ENCODE measurements at regions of chr20 and their contacts with region 1.

Region 1: DNA sequence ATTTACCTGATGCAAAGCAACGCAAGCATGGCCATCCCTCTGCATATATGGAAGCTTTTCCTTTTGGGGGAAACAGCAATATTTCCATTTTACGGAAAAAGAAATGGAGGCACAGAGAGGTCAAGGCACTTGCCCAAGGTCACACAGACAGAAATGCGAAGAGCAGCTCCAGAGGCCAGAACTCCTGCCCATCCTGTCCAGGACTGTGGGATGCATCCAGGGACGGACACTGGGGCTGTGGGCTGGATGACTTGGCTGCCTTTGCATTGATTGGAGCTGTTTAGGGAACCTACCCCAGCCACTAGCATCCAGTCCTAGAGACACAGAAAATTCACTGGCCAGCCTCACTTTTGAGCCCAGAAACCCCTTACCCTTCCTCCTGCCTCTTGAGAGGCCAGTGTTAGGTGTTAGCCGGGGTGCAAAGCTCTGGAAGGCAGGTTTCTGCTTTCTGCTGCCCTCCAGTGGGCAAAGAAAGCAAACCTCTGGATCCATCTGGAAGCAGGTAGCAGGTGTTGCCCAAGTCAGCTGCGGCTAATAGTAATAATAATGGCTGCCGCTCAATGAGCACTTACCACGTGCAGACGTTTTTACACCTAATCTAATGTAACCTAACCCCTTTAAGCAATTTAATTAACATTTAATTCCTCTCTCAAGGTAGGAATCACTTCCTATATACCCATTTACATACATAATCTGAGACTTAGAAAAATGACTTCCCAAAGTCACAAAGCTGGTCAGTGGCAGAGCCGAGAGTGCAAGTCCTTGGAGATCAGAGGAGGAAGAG is 31.7 kb upstream of the CCN5 start:
- DNase-seq: peak; percentile 82
- ATAC-seq: peak; percentile 89
- H3K4me3 Mint-ChIP-seq: no peak overlapping the region
- H3K27ac Mint-ChIP-seq: no peak overlapping the region
- H3K4me1 Mint-ChIP-seq: peaks cover 7% of the 10 kb centered on the region
- H3K27me3 Mint-ChIP-seq: peaks cover 7% of the 10 kb centered on the region

Region 2: GRCh38 chr20:44642203-44643153 is 41.0 kb before region 1 on chr20:
- CTCF ChIA-PET with region 1: interaction called, 186 read pairs
- DNase-seq: peak; percentile 71
- ATAC-seq: peak; percentile 18
- H3K4me3 Mint-ChIP-seq: peak overlapping the region; percentile 61
- H3K27ac Mint-ChIP-seq: peak overlapping the region; percentile 98
- H3K4me1 Mint-ChIP-seq: peaks cover 72% of the 10 kb centered on the region
- H3K27me3 Mint-ChIP-seq: no peaks in the 10 kb centered on the region

Region 3: GRCh38 chr20:44695295-44696230 is 12.1 kb after region 1 on chr20:
- CTCF ChIA-PET with region 1: interaction called, 10 read pairs
- DNase-seq: no peak
- ATAC-seq: no peak
- H3K4me3 Mint-ChIP-seq: no peak overlapping the region
- H3K27ac Mint-ChIP-seq: no peak overlapping the region
- H3K4me1 Mint-ChIP-seq: no peaks in the 10 kb centered on the region
- H3K27me3 Mint-ChIP-seq: peaks cover 10% of the 10 kb centered on the region

Region 4: GRCh38 chr20:44747166-44748004 is 63.9 kb after region 1 on chr20:
- CTCF ChIA-PET with region 1: interaction called, 19 read pairs
- DNase-seq: peak; percentile 74
- ATAC-seq: peak; percentile 48
- H3K4me3 Mint-ChIP-seq: no peak overlapping the region
- H3K27ac Mint-ChIP-seq: no peak overlapping the region
- H3K4me1 Mint-ChIP-seq: peaks cover 8% of the 10 kb centered on the region
- H3K27me3 Mint-ChIP-seq: peaks cover 42% of the 10 kb centered on the region

Region 5: GRCh38 chr20:44924570-44924969 is 241.1 kb after region 1 on chr20:
- CTCF ChIA-PET with region 1: no interaction called
- DNase-seq: no peak
- ATAC-seq: no peak
- H3K4me3 Mint-ChIP-seq: no peak overlapping the region
- H3K27ac Mint-ChIP-seq: no peak overlapping the region
- H3K4me1 Mint-ChIP-seq: no peaks in the 10 kb centered on the region
- H3K27me3 Mint-ChIP-seq: no peaks in the 10 kb centered on the region

Region 6: GRCh38 chr20:45103072-45103471 is 419.6 kb after region 1 on chr20:
- CTCF ChIA-PET with region 1: no interaction called
- DNase-seq: no peak
- ATAC-seq: no peak
- H3K4me3 Mint-ChIP-seq: no peak overlapping the region
- H3K27ac Mint-ChIP-seq: no peak overlapping the region
- H3K4me1 Mint-ChIP-seq: peaks cover 10% of the 10 kb centered on the region
- H3K27me3 Mint-ChIP-seq: peaks cover 54% of the 10 kb centered on the region